ENCODE measurements at regions of chr17 and their contacts with region 1.

Region 1: DNA sequence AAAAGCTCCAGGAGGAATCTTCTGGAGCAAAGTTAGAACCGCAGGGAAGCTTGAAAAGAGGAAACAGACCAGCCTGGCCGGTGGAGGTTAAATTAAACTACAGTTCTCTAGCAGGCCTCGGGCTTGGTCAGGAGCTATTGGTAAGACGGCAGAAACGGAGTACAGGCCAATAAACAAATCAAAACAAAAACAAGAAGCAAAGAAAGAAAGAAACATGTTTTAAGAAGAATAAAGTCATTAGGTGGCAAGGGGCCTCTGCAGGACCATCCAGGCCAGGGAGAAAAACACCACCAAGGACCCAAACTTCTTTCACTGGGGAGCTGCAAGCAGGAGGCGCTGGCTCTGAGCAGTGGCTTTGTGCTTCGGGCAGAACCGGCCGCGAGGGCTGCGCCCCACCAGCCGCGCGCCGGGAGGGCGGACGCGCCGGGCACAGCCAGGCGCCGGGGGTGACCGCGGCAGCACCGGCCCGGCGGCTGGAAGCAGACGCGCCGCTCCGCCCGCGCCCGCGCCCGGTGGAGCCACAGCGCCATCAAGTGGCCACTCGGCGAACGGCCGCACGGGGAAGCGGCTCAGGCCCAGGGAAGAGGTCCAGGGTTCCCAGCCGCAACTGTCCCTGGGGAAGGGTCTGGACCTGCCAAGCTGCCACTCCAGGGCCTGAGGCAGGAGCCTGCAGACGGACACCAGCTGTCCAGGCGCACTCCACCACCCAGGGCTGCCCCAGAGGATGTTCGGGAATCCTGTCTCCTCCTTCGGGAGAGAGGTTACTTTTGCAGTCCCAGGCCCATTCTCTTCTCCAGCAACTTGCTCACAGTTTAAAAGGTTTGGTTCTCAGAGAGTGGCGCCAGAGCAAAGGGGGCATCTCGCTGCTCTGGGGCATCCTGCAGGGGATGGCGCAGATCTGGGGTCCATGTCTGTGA is 419.4 kb downstream of the SOX9 start:
- H3K4me3 ChIP-seq: no peak overlapping the region
- H3K27ac ChIP-seq: peak overlapping the region; percentile 50; the same call in 1 of the 2 replicates
- H3K4me1 ChIP-seq: peaks cover 4% of the 10 kb centered on the region
- CTCF ChIP-seq: peak; percentile 88

Region 2: GRCh38 chr17:71482625-71483024 is 1057.6 kb before region 1 on chr17:
- CTCF ChIA-PET with region 1: interaction called, 11 read pairs
- POLR2A ChIA-PET with region 1: no interaction called
- H3K4me3 ChIP-seq: no peak overlapping the region
- H3K27ac ChIP-seq: no peak overlapping the region
- H3K4me1 ChIP-seq: no peaks in the 10 kb centered on the region
- CTCF ChIP-seq: no peak

Region 3: DNA sequence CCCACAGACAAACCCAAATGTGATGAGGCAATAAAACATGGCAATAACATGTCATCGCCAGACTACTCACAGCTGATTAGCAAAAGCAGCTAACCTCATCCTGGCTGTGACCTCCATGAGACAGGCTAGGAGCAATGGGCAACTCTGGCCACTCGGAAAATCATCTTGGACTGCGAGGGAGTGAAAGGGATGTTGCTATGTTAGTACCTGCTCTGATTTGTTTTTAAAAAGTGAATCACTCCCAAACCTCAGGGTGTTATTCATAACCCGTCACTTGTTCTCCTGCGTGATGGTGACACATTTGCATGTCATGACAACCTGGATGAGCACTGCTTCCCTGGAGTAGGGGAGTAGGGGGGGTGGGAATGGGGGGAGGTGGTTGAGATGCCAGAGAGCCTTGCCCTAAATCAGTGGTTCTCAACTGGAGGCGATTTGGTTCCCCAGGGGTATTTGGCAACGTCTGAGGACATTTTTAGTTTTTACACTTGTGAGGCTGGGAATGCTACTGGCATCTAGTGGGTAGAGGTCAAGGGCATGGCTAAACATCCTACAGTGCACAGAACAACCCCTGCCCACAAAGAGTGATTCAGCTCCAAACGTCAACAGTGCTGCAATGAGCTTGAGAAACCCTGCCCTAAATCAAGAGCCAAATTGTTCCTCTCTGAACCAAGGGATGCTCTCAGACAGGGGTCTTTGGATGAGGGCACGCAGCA is 177.7 kb before region 1 on chr17:
- CTCF ChIA-PET with region 1: no interaction called
- POLR2A ChIA-PET with region 1: no interaction called
- H3K4me3 ChIP-seq: no peak overlapping the region
- H3K27ac ChIP-seq: no peak overlapping the region
- H3K4me1 ChIP-seq: no peaks in the 10 kb centered on the region
- CTCF ChIP-seq: no peak

Region 4: GRCh38 chr17:72498364-72499210 is 41.7 kb before region 1 on chr17:
- CTCF ChIA-PET with region 1: no interaction called
- POLR2A ChIA-PET with region 1: no interaction called
- H3K4me3 ChIP-seq: no peak overlapping the region
- H3K27ac ChIP-seq: no peak overlapping the region
- H3K4me1 ChIP-seq: peaks cover 5% of the 10 kb centered on the region
- CTCF ChIP-seq: no peak

Measured in HEK293 (cell line).